ENCODE measurements at regions of chr2 and their contacts with region 1.

Region 1: GRCh38 chr2:231297108-231297908 is 98.2 kb upstream of the B3GNT7 start:
- DNase-seq: peak in 2 of 3 donors; percentile 48
- H3K4me3 ChIP-seq: no peak overlapping the region
- H3K27ac ChIP-seq: no peak overlapping the region
- H3K4me1 ChIP-seq: peaks cover 10 to 44% (median 28%) of the 10 kb centered on the region in 4 experiments
- H3K27me3 ChIP-seq: no peaks in the 10 kb centered on the region

Region 2: DNA sequence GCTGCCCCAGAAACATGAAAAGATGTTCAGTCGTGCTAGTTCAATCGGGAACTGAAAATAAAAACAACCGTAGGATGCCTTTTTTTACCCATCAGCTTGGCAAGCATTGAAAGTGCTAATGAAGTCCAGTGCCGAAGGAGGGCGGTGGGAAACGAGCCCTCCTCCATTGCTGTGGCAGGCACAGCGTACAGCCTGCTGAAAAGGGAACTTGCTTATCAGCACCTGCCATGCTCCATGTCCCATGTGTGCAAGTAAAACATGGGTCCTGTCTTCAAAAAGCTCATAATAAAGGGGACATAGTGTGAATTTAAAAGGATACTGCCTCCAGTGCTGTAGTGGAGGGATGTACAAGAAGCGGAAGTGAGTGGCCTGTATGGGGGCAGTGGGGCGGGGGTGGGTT is 16.5 kb before region 1 on chr2:
- CTCF ChIA-PET with region 1: interaction called, 21 read pairs
- POLR2A ChIA-PET with region 1: no interaction called
- DNase-seq: peak; percentile 75 to 96 (median 91)
- H3K4me3 ChIP-seq: peak overlapping the region in 3 of 7 experiments; percentile 7 to 43 (median 22)
- H3K27ac ChIP-seq: peak overlapping the region in 1 of 2 experiments; percentile 22
- H3K4me1 ChIP-seq: peaks cover 4 to 12% (median 8%) of the 10 kb centered on the region in 4 experiments
- H3K27me3 ChIP-seq: no peaks in the 10 kb centered on the region

Region 3: DNA sequence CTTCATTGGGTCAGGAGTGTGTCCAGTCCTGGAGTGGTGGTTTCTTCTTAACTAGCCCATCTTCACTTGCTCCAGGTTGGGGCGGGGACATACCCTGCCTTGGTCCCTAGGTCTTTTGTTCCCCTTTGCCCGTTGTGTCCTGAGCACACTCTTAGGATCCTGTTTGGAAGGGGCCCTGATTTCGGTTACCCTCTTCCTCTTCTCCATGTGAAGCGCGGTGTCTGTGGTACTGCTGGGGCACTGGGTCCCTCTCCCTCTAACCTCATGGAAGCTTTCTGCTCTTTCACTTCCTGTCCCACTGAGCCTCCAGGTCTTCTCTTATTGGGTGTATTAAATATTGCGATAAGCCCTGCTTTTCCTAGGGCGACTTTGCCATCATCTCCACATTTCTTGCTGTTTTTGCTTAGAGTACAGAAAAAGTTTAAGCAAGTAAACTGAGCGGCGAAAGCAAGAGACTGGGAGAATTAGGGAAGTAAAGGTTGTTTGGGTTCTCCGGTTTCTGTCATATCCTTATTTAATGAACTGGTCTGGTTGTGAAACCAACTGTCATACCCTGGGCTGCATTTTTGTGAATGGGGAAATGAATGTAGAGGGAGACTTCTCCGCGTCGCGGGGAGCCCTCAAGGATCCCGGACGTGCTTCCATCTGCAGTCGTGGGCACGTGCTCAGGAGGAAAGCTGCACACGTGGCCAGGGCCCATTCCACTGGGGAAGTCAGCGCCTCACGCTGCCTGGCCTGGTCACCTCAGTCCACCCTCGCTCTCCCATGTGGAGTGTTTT is 24.4 kb after region 1 on chr2:
- CTCF ChIA-PET with region 1: interaction called, 10 read pairs
- POLR2A ChIA-PET with region 1: no interaction called
- DNase-seq: peak; percentile 60 to 91 (median 85)
- H3K4me3 ChIP-seq: peak overlapping the region in 5 of 7 experiments; percentile 28 to 74 (median 33)
- H3K27ac ChIP-seq: peak overlapping the region; percentile 10 to 21
- H3K4me1 ChIP-seq: peaks cover 0 to 40% (median 18%) of the 10 kb centered on the region in 4 experiments
- H3K27me3 ChIP-seq: no peaks in the 10 kb centered on the region

Region 4: DNA sequence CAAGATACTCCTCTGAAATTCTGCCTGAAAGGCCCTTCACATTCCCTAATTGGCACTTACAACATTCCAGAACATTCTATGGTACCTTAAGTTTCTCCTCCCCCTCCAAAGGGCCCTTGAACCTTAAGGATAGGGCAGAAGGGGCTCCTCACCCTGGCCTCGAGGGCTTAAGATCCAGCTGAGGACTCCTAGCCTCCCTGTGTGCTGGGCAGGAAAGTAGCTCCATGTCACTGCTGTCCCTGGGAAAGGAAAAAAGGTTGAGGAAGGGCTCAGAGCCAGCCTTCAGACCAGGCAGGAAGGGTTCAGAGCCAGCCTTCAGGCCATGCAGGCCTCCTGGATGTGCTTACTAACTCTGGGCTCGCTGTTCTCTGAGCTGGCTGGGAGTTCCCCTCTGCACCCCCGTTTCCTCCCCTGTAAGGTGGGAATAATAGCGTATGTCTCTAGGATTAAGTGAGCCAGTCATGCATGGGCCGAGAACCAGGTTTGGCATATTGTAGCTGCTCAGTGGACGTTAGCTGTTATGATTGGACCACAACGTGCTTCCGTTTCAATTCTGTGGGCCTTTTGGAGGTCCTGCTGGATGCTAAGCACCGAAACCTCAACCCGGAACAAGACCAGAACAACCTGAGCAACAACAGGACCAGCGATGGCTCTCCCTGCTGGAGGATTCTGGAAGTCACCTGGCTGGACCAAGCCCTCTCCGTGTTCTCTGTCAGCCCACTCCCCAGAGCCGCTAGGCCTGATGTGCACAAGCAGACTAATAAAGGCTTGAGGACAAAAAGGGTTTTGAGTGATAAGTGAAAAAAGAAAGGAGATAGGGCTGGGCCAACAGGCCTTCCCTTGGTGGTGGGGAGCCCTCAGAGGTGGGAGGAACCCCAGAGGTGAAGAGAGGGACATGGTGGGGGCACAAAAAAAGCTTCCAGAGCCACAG is 97.2 kb after region 1 on chr2:
- CTCF ChIA-PET with region 1: interaction called, 15 read pairs
- POLR2A ChIA-PET with region 1: no interaction called
- DNase-seq: no peak
- H3K4me3 ChIP-seq: peak overlapping the region in 1 of 7 experiments; percentile 4
- H3K27ac ChIP-seq: peak overlapping the region in 1 of 2 experiments; percentile 15
- H3K4me1 ChIP-seq: peaks cover 6 to 47% (median 41%) of the 10 kb centered on the region in 4 experiments
- H3K27me3 ChIP-seq: peaks cover 0 to 19% (median 6%) of the 10 kb centered on the region in 5 experiments

Region 5: GRCh38 chr2:231399853-231400680 is 102.8 kb after region 1 on chr2:
- CTCF ChIA-PET with region 1: interaction called, 22 read pairs
- POLR2A ChIA-PET with region 1: no interaction called
- DNase-seq: peak in 1 of 3 donors; percentile 38
- H3K4me3 ChIP-seq: no peak overlapping the region
- H3K27ac ChIP-seq: no peak overlapping the region
- H3K4me1 ChIP-seq: peaks cover 0 to 16% (median 9%) of the 10 kb centered on the region in 4 experiments
- H3K27me3 ChIP-seq: peaks cover 0 to 14% (median 2%) of the 10 kb centered on the region in 5 experiments

Measured in common myeloid progenitor, CD34-positive (primary cell).